ENCODE measurements at regions of chr2 and their contacts with region 1.

Region 1: DNA sequence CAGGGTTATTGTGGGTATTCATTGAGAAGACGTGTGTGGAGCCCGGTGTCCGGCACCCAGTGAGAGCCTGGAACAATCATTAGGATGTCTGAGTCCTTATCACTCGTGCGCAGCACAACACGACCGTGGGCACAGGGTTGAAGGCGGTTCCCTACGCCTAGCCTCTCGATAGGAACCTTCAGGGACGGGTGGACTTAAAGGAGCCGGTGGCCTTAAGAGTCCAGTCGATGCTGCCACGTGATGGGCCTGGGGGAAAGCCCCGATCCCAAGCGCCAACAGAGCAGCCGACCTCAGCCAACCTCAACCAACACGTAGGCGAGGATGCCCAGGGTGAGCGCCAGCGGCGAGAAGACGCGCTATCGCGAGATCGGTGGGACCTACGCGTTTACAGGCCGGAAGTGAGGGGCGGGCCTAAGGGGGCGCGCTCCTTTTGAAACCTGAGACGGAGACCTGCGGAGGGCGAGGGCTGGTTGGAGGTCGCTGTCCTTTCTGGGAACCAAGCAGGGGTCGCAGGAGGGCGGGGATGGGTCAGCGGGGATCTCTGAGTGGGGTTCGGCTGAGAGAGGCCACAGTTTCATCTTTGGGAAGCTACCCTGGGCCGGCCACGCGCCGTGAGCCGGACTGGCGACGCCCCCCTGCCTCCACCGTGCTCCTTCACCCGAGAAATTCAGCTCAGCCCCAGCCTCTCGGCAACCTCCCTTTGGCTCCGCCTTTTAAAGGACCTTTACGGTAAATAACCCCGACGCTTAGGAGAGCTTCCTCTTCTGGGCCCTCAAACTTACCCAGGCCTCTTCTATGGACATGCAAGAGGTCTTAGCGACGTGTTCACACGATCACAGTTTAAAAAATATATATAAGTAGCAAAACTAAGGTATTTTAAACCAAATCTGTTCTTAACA is 28.3 kb downstream of the WNT10A start:
- DNase-seq: peak; percentile 97
- ATAC-seq: peak; percentile 98
- H3K4me3 Mint-ChIP-seq: peak overlapping the region; percentile 85
- H3K27ac Mint-ChIP-seq: peak overlapping the region; percentile 83
- H3K4me1 Mint-ChIP-seq: peaks cover 13% of the 10 kb centered on the region
- H3K27me3 Mint-ChIP-seq: peaks cover 16% of the 10 kb centered on the region

Region 2: DNA sequence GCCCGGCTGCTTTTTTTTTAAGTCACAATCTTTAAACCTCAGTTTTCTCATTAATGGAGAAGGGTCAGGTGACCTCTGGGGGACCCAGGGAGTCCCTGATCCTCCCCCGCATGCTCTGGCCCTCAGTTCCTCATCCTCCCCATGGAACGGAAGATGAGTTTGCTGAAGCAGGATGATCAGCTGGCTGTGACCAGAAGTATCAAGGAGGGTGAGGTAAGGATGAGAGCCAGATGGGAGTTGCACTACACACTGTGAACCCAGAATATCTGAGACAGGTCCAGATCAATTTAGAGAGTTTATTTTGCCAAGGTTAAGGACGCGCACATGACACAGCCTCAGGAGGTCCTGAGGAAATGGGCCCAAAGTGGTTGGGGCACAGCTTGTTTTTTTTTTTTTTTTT is 548.5 kb before region 1 on chr2:
- CTCF ChIA-PET with region 1: no interaction called
- POLR2A ChIA-PET with region 1: no interaction called
- intact Hi-C with region 1: no loop called
- DNase-seq: no peak
- ATAC-seq: no peak
- H3K4me3 Mint-ChIP-seq: no peak overlapping the region
- H3K27ac Mint-ChIP-seq: no peak overlapping the region
- H3K4me1 Mint-ChIP-seq: no peaks in the 10 kb centered on the region
- H3K27me3 Mint-ChIP-seq: no peaks in the 10 kb centered on the region

Region 3: DNA sequence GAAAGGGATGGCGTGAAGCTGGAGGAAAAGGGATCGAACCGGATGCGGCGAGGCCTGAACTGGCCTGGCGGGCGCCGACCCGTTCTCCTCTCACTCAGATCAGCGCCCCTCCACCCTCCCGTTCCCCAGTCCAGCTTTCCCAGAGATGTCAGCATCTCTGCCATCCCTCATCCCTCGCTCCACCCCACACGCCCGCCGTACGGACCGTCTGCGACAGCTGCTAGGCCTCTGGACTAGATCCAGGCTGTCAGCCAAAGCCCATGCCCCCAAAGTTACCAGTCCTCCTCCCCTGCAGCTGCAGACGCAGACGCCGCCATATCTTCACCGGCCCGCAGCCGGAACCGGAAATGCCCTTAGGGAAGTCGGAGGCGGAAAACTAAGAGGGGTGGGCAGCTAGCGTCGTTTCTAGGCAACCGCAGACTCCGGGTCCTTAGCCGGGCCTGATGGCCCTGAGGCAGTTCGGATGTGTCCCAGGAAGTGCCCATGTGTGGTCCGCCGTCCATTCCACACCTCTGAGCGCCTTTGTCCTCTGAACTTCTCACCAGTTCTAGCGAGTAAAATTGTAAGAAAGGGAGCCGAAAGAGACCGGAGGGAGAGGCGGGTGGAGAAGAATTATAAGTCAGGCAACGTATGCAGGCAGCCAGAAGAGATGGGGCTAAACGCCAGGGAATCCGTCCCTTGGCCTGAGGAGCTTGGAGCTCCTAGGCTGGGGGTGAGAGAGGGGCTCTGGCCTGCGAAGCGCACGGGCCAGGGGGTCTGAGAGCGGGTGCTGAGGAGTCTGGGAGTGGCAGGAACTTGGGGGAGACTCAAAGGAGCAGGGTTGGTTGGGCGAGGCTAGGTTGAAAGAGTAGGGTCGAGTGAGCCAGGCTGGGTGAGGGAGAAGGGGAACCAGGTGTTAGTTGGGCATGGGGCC is 237.1 kb before region 1 on chr2 and contains the starts of genes RNF25 and STK36:
- CTCF ChIA-PET with region 1: no interaction called
- POLR2A ChIA-PET with region 1: no interaction called
- intact Hi-C with region 1: loop called in 1 of 2 experiments (anchors 1 kb)
- DNase-seq: peak; percentile 90
- ATAC-seq: peak; percentile 98
- H3K4me3 Mint-ChIP-seq: peak within 1 kb of the TSS; percentile 95
- H3K27ac Mint-ChIP-seq: peak within 1 kb of the TSS; percentile 87
- H3K4me1 Mint-ChIP-seq: peaks cover 22% of the 10 kb centered on the region
- H3K27me3 Mint-ChIP-seq: no peaks in the 10 kb centered on the region
- total RNA-seq, gene RNF25: 14.1 to 29.2 TPM
- total RNA-seq, gene STK36: 13.1 to 19.3 TPM

Region 4: DNA sequence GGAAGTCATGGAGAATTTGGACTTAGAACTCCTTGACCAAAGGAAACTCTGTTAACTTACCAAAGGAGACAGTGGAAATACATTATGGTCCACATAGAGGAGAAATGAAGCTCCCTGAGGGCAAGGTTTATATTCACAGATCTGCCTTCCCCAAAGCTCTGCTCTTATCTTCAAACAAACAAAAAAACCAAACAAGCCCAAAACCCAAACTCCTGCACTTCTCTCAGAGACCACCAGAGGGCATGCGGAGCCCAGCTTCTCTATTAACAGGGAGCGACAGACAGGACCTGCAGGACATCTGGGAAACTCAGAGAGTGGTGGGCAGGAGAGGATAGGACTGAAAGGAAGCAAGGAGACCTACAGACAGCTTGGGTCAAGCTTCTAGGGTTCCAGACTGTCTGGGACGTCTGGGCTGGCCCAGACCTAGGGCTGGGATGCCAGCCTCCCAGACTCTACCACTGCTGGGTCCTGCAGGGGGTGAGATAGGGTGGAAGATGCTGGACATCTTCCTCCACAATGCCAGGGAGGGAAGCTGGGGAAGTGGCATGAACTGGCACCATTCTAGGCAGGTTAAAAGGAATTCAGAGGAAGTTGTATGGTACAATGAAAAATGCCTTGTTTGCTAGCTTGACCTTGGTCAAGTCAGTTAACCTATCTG is 32.3 kb before region 1 on chr2:
- CTCF ChIA-PET with region 1: interaction called, 48 read pairs
- POLR2A ChIA-PET with region 1: no interaction called
- intact Hi-C with region 1: no loop called
- DNase-seq: peak; percentile 83
- ATAC-seq: no peak
- H3K4me3 Mint-ChIP-seq: no peak overlapping the region
- H3K27ac Mint-ChIP-seq: no peak overlapping the region
- H3K4me1 Mint-ChIP-seq: peaks cover 43% of the 10 kb centered on the region
- H3K27me3 Mint-ChIP-seq: peaks cover 39% of the 10 kb centered on the region

Measured in activated CD4-positive, alpha-beta T cell treated with anti-CD3 and anti-CD28 coated beads for 36 hours (primary cell).